ENCODE measurements at regions of chr9 and their contacts with region 1.

Region 1: GRCh38 chr9:120792898-120793765 is at the start of gene FBXW2:
- DNase-seq: peak; percentile 56 to 95
- H3K4me3 ChIP-seq: peak within 1 kb of the TSS; percentile 98 to 99
- H3K27ac ChIP-seq: peak within 1 kb of the TSS; percentile 88 to 95
- H3K4me1 ChIP-seq: peaks cover 7 to 31% of the 10 kb centered on the region in 2 donors
- H3K27me3 ChIP-seq: no peaks in the 10 kb centered on the region
- CTCF ChIP-seq: peak in 1 of 3 experiments; percentile 4
- total RNA-seq, gene FBXW2: 35.5 TPM

Region 2: DNA sequence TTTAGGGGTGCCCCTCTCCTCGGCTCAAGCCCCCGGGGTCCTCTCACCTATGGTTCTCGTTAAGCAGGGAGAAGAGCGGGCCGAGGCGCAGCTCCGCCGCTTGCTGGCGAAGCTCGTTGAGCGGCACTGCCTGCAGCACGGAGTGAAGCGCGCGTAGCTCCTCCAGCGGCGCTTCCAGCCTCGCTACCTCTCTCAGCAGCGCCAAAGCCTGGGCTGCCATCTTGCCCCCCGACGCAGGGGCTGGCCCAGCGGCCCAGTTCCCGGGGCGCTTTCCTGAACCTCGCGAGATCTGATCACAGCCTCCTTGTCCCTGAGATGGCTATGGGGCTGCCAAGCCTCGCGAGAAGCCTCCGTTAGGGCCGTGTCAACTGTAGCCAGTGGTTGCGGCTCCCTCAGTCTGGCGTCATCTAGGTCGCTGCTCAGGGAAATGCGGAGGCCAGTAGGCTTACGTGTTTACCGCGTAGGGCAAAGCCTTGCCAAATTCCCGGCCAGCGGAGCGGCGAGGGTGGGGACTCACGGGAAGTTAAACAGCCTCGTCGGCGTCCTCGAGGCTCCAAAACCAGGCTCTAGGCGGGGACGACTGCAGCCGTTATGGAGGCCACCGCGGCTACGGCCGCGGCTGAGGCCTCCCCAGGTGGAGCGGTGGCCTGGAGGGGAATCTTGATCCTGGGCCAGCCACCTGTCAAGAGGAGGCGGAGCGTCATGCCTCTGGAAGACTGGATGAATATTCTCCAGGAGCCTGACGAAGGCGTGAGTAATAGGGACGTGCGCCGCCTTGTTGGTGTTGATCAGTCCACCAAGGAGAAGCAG is 49.8 kb after region 1 on chr9 and contains the start of gene PSMD5:
- intact Hi-C with region 1: loop called (anchors 1 kb)
- DNase-seq: peak; percentile 99 to 100
- H3K4me3 ChIP-seq: peak within 1 kb of the TSS; percentile 75 to 84
- H3K27ac ChIP-seq: peak within 1 kb of the TSS; percentile 89 to 97
- H3K4me1 ChIP-seq: peaks cover 2 to 25% of the 10 kb centered on the region in 2 donors
- H3K27me3 ChIP-seq: no peaks in the 10 kb centered on the region
- CTCF ChIP-seq: no peak
- total RNA-seq, gene PSMD5: 18.2 TPM